CD14-positive monocyte (primary cell): ENCODE measurements at regions of chr7 and their contacts with region 1.

Region 1: GRCh38 chr7:15291702-15292101 is 270.1 kb downstream of the AGMO start:
- DNase-seq: no peak
- H3K4me3 ChIP-seq: no peak overlapping the region
- H3K4me3 Mint-ChIP-seq: no peak overlapping the region
- H3K27ac ChIP-seq: no peak overlapping the region
- H3K27ac Mint-ChIP-seq: no peak overlapping the region
- H3K4me1 ChIP-seq: no peaks in the 10 kb centered on the region
- H3K4me1 Mint-ChIP-seq: no peaks in the 10 kb centered on the region
- H3K27me3 ChIP-seq: no peaks in the 10 kb centered on the region
- H3K27me3 Mint-ChIP-seq: peaks cover 0 to 2% (median 0%) of the 10 kb centered on the region in 3 donors
- CTCF ChIP-seq: no peak

Region 2: DNA sequence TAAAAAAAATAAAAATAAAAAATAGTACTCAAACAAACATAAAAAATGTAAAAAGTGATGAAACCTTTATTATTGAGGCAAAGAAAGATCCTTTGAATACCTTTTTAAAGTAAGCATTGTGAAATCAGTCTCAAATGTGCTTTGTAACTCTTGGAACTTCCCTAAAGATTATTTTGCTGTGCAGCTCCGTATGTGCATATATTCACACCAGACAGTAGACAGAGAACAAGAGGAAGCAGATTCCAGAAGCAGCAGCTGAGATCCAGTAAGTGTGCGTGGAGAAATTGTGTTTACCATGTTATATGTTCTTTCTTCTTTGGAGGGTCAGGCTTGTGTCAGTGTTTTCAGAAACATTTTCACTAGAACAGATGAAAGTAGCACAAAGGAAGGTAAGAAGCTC is 54.8 kb before region 1 on chr7:
- intact Hi-C with region 1: loop called in 1 of 2 experiments (anchors 10 kb)
- DNase-seq: peak in 2 of 3 donors; percentile 12 to 58
- H3K4me3 ChIP-seq: no peak overlapping the region
- H3K4me3 Mint-ChIP-seq: no peak overlapping the region
- H3K27ac ChIP-seq: no peak overlapping the region
- H3K27ac Mint-ChIP-seq: peak overlapping the region in 5 of 7 donors; percentile 6 to 82 (median 36)
- H3K4me1 ChIP-seq: peaks cover 0 to 20% of the 10 kb centered on the region in 2 donors
- H3K4me1 Mint-ChIP-seq: peaks cover 28% of the 10 kb centered on the region
- H3K27me3 ChIP-seq: no peaks in the 10 kb centered on the region
- H3K27me3 Mint-ChIP-seq: peaks cover 0 to 1% (median 0%) of the 10 kb centered on the region in 3 donors
- CTCF ChIP-seq: no peak

Region 3: DNA sequence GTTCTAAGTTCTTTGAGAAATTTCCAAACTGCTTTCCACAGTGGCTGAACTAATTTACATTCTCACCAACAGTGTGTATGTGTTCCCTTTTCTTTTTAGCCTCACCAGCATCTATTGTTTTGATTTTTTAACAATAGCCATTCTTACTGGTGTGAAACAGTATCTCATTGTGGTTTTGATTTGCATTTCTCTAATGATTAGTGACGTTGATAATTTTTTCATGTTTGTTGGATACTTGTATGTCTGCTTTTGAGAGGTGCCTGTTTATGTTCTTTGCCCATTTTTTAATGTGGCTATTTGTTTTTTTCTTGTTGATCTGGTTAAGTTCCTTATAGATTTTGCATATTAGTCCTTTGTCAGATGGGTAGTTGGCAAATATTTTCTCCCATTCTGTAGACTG is 78.7 kb after region 1 on chr7:
- intact Hi-C with region 1: no loop called
- DNase-seq: no peak
- H3K4me3 ChIP-seq: no peak overlapping the region
- H3K4me3 Mint-ChIP-seq: no peak overlapping the region
- H3K27ac ChIP-seq: no peak overlapping the region
- H3K27ac Mint-ChIP-seq: no peak overlapping the region
- H3K4me1 ChIP-seq: no peaks in the 10 kb centered on the region
- H3K4me1 Mint-ChIP-seq: no peaks in the 10 kb centered on the region
- H3K27me3 ChIP-seq: no peaks in the 10 kb centered on the region
- H3K27me3 Mint-ChIP-seq: no peaks in the 10 kb centered on the region
- CTCF ChIP-seq: no peak